Activated naive CD4-positive, alpha-beta T cell treated with anti-CD3 and anti-CD28 coated beads for 36 hours (primary cell): ENCODE measurements at regions of chr7 and their contacts with region 1.

Region 1: GRCh38 chr7:107168233-107169119 is at the start of gene HBP1:
- DNase-seq: peak; percentile 99
- H3K4me3 Mint-ChIP-seq: peak within 1 kb of the TSS; percentile 97
- H3K27ac Mint-ChIP-seq: peak within 1 kb of the TSS; percentile 99
- H3K4me1 Mint-ChIP-seq: peaks cover 23% of the 10 kb centered on the region
- H3K27me3 Mint-ChIP-seq: no peaks in the 10 kb centered on the region
- total RNA-seq, gene HBP1: 41.8 to 42.2 TPM

Region 2: GRCh38 chr7:106112117-106112971 is 1056.1 kb before region 1 on chr7 and contains the start of gene SYPL1:
- CTCF ChIA-PET with region 1: no interaction called
- intact Hi-C with region 1: loop called (anchors 5 kb)
- DNase-seq: peak; percentile 94
- H3K4me3 Mint-ChIP-seq: peak within 1 kb of the TSS; percentile 85
- H3K27ac Mint-ChIP-seq: peak within 1 kb of the TSS; percentile 92
- H3K4me1 Mint-ChIP-seq: peaks cover 71% of the 10 kb centered on the region
- H3K27me3 Mint-ChIP-seq: no peaks in the 10 kb centered on the region
- total RNA-seq, gene SYPL1: 24.7 to 26.6 TPM

Region 3: GRCh38 chr7:106460792-106461254 is 707.7 kb before region 1 on chr7:
- CTCF ChIA-PET with region 1: no interaction called
- intact Hi-C with region 1: no loop called
- DNase-seq: no peak
- H3K4me3 Mint-ChIP-seq: no peak overlapping the region
- H3K27ac Mint-ChIP-seq: peak overlapping the region; percentile 13
- H3K4me1 Mint-ChIP-seq: peaks cover 29% of the 10 kb centered on the region
- H3K27me3 Mint-ChIP-seq: no peaks in the 10 kb centered on the region

Region 4: GRCh38 chr7:106598663-106599342 is 569.7 kb before region 1 on chr7:
- CTCF ChIA-PET with region 1: no interaction called
- intact Hi-C with region 1: loop called (anchors 2 kb)
- DNase-seq: peak; percentile 85
- H3K4me3 Mint-ChIP-seq: peak overlapping the region; percentile 44
- H3K27ac Mint-ChIP-seq: no peak overlapping the region
- H3K4me1 Mint-ChIP-seq: peaks cover 4% of the 10 kb centered on the region
- H3K27me3 Mint-ChIP-seq: no peaks in the 10 kb centered on the region

Region 5: DNA sequence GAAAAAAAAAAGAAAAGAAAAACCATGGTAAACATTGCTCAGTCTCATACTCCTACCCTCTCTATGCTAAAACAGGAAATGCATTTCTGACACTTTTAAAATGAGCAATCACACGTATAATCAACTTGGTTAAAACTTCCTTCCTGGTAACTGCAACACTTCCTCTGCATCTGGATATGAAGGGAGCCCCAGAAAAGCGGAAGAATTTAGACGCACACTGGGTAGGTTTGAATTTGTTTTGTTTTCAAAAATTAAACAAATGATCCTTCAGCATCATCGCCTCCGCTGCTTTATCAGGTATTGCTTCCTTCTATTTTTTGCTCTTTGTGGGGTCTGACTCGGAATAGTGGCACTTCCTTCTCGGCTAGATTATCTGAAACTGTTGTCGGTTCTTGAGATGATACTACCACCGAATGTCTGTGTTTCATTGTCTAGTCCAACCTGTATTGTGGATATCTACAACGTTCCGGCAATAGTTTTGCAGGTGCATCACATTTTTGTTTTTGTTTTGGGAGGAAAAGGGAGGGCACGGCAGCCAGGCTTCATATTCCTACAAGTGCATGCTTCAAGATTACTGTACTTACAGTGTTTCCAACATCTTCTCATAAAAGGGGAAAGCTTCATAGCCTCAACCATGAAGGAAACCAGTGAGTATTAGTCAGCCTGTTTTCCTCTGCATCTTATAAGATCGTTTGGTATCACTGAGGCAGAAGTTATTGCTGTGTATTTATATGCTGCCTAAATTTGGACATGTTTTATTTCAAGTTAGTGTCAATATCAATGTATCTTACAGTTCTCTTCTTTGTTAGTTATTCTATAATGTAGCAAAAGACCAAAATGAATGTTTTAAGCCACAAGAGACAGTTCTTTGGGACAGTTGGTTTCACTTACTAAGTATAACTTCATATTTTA is 303.1 kb before region 1 on chr7 and contains the start of gene PIK3CG:
- CTCF ChIA-PET with region 1: interaction called, 4 read pairs
- intact Hi-C with region 1: loop called (anchors 1 kb)
- DNase-seq: no peak
- H3K4me3 Mint-ChIP-seq: peak within 1 kb of the TSS; percentile 79
- H3K27ac Mint-ChIP-seq: peak within 1 kb of the TSS; percentile 65
- H3K4me1 Mint-ChIP-seq: peaks cover 77% of the 10 kb centered on the region
- H3K27me3 Mint-ChIP-seq: no peaks in the 10 kb centered on the region
- total RNA-seq, gene PIK3CG: 3.6 to 3.8 TPM

Region 6: GRCh38 chr7:107180378-107180777 is 11.9 kb after region 1 on chr7:
- CTCF ChIA-PET with region 1: interaction called, 5 read pairs
- intact Hi-C with region 1: loop called (anchors 1 kb)
- DNase-seq: peak; percentile 91
- H3K4me3 Mint-ChIP-seq: peak overlapping the region; percentile 30
- H3K27ac Mint-ChIP-seq: peak overlapping the region; percentile 78
- H3K4me1 Mint-ChIP-seq: peaks cover 52% of the 10 kb centered on the region
- H3K27me3 Mint-ChIP-seq: no peaks in the 10 kb centered on the region

Region 7: GRCh38 chr7:107743567-107744344 is 575.3 kb after region 1 on chr7 and contains the start of gene CBLL1:
- CTCF ChIA-PET with region 1: interaction called, 3 read pairs
- intact Hi-C with region 1: loop called (anchors 1 kb)
- DNase-seq: peak; percentile 98
- H3K4me3 Mint-ChIP-seq: peak within 1 kb of the TSS; percentile 96
- H3K27ac Mint-ChIP-seq: peak within 1 kb of the TSS; percentile 100
- H3K4me1 Mint-ChIP-seq: peaks cover 42% of the 10 kb centered on the region
- H3K27me3 Mint-ChIP-seq: no peaks in the 10 kb centered on the region
- total RNA-seq, gene CBLL1: 31.6 to 32.1 TPM

Region 8: GRCh38 chr7:107768272-107768671 is 599.8 kb after region 1 on chr7:
- CTCF ChIA-PET with region 1: no interaction called
- intact Hi-C with region 1: no loop called
- DNase-seq: no peak
- H3K4me3 Mint-ChIP-seq: no peak overlapping the region
- H3K27ac Mint-ChIP-seq: no peak overlapping the region
- H3K4me1 Mint-ChIP-seq: peaks cover 23% of the 10 kb centered on the region
- H3K27me3 Mint-ChIP-seq: no peaks in the 10 kb centered on the region

Region 9: DNA sequence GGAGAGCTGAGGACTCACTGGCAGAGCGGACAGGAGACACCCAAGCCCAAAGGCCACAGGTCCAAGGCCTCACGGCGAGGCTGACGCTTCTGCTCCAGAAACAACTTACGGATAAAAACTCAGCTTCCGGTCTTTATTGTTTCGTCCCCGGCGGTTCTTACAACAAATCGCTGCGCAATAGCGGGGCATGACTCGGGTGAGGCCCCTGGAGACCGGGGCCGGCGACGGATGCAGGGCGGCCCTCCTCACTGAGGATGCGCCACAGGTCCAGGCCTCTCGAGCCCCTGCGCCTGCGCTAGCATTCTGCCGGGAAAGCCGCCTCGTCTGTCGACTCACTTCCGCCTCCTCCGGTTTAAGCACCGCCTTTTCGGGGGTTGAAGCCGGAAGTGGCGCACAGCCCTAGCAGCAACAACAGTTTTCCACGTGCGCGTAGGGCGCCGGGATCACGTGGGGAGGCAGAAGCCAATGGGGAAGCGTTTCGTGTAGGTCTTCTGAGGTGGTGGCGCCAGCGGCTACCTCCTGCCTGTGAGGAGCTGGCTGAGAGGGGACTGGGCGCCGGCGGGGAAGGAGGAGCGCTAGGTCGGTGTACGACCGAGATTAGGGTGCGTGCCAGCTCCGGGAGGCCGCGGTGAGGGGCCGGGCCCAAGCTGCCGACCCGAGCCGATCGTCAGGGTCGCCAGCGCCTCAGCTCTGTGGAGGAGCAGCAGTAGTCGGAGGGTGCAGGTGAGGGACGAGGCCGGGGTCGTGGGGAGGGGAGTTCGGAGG is 1401.1 kb after region 1 on chr7 and contains the starts of genes DNAJB9 and THAP5:
- CTCF ChIA-PET with region 1: no interaction called
- intact Hi-C with region 1: loop called (anchors 2 kb)
- DNase-seq: peak; percentile 99
- H3K4me3 Mint-ChIP-seq: peak within 1 kb of the TSS; percentile 98
- H3K27ac Mint-ChIP-seq: peak within 1 kb of the TSS; percentile 99
- H3K4me1 Mint-ChIP-seq: peaks cover 49% of the 10 kb centered on the region
- H3K27me3 Mint-ChIP-seq: no peaks in the 10 kb centered on the region
- total RNA-seq, gene DNAJB9: 8.2 TPM
- total RNA-seq, gene THAP5: 22.7 to 24.8 TPM